Kidney (tissue), 22 donors: ENCODE measurements at regions of chr2 and their contacts with region 1.

Region 1: DNA sequence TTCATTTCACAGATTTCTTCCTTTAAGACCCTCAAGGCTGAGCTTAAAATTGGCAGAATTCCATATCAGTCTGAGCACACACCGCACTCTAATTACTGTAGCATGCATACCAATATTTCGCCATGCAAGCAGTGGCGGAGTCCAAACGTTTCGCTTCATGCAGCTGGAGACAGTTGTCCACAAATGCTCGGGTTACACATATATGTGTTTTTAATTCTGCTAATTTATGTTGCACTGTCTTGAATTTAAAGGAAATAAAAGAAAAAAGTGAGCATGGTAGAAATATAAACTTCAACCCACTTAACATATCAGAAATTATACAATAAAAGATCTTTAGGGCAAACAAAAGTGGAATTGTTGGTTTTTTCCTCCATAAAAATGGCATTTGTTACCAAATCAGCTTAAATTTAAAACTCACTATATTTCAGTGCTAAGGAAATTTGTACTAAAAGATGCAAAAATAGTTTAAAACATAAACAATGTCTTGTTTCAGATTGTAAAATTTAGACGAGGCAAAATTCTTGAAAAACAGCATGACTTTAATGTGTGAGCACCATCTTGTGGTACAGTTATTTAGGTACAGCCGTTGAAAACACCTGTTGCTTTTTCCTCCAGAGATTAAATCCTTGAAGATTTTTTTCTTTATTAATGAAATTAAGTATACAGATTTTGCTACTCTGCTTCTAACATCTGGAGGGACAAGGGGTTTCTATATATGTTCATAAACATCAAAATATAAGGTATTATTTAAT is 24.1 kb upstream of the KANSL1L start:
- DNase-seq: peak in 2 of 5 donors; percentile 69 to 70
- H3K4me3 ChIP-seq: peak overlapping the region; percentile 28 to 64 (median 53)
- H3K27ac ChIP-seq: peak overlapping the region; percentile 7 to 68
- H3K4me1 ChIP-seq: peaks cover 0 to 34% (median 0%) of the 10 kb centered on the region in 3 donors
- H3K27me3 ChIP-seq: no peaks in the 10 kb centered on the region
- CTCF ChIP-seq: peak; percentile 74

Region 2: DNA sequence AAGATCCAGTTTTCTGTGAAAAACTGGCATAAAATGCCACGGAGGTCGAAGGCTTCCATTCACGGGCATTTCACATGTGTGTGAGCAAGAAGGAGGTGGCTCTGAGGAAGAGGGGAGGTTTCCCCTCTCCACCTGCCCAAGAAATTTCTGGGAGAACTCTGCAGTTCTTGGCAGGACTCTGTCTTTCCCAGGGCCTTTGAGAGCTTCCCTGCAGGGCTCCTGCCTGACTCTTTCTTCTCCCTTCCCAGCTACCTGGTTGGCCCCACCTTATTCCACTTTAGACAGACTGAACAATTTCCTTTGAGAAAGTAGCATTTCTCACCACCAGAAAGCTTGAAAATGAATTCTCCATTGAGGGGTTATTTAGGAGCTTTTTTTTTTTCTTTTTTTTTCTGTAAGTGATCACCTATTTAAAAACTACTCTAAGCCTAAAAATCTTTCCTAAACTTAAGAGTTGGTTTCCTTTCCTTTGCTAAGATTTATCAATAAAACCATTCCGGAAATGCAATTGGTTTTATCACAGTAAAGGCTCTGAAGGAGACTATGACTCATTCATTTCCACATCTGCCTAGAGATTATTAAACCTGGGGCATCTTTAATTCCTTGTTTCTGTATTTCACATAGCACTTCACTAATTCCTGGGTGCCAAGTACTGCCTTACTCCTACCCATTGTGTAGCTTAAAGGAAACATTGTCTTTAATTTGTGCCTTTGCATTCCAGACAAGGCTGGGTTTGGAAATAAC is 364.4 kb before region 1 on chr2:
- intact Hi-C with region 1: no loop called
- DNase-seq: no peak
- H3K4me3 ChIP-seq: no peak overlapping the region
- H3K27ac ChIP-seq: no peak overlapping the region
- H3K4me1 ChIP-seq: no peaks in the 10 kb centered on the region
- H3K27me3 ChIP-seq: no peaks in the 10 kb centered on the region
- CTCF ChIP-seq: no peak

Region 3: GRCh38 chr2:209984291-209984690 is 211.0 kb before region 1 on chr2:
- intact Hi-C with region 1: loop called (anchors 5 kb)
- DNase-seq: no peak
- H3K4me3 ChIP-seq: no peak overlapping the region
- H3K27ac ChIP-seq: no peak overlapping the region
- H3K4me1 ChIP-seq: no peaks in the 10 kb centered on the region
- H3K27me3 ChIP-seq: no peaks in the 10 kb centered on the region
- CTCF ChIP-seq: no peak